ENCODE measurements at regions of chr16 and their contacts with region 1.

Region 1: GRCh38 chr16:67514382-67514828 is 14.2 kb upstream of the RIPOR1 start:
- DNase-seq: peak; percentile 54 to 83 (median 76)
- ATAC-seq: peak; percentile 91
- H3K4me3 ChIP-seq: no peak overlapping the region
- H3K4me3 Mint-ChIP-seq: peak overlapping the region in 2 of 10 donors; percentile 24 to 63
- H3K27ac ChIP-seq: no peak overlapping the region
- H3K27ac Mint-ChIP-seq: peak overlapping the region in 7 of 9 donors; percentile 14 to 61 (median 40)
- H3K4me1 ChIP-seq: peaks cover 4 to 5% of the 10 kb centered on the region in 2 donors
- H3K4me1 Mint-ChIP-seq: peaks cover 13 to 28% (median 21%) of the 10 kb centered on the region in 7 donors
- H3K27me3 ChIP-seq: no peaks in the 10 kb centered on the region
- H3K27me3 Mint-ChIP-seq: peaks cover 0 to 5% (median 0%) of the 10 kb centered on the region in 5 donors

Region 2: DNA sequence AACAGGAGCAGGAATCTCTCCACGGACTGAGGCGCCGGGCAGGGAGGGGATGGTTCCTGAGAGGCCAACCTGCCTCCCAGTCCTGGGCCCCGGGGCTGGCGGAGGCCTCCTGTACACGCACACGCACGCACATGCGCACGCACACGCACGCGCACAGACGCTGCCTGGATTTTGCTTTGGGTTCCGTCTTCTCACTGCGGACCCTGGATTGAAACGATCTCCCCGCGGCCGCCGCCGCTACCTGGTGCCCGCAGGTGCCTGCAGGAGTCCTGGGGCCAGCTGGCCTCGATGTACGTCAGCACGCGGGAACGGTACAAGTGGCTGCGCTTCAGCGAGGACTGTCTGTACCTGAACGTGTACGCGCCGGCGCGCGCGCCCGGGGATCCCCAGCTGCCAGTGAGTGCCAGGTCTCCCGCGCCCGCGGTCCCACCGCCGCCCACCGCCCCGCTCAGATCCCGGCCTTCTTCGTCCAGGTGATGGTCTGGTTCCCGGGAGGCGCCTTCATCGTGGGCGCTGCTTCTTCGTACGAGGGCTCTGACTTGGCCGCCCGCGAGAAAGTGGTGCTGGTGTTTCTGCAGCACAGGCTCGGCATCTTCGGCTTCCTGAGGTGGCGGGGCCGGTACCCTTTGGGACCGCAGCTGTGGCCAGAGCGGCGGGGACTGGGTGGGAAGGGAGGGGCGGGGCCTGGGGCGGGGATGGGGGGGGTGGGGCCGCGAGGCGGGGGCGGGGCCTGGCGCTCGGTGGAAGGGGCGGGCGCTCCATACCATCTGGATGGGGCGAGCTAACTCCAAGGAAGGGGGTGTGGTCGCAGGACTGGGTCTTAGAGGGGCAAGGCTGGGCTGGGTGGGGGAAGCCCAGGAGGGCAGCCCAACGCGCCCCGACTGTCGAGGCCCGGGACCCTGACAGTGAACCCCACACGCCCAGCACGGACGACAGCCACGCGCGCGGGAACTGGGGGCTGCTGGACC is 513.7 kb before region 1 on chr16:
- CTCF ChIA-PET with region 1: no interaction called
- POLR2A ChIA-PET with region 1: no interaction called
- intact Hi-C with region 1: no loop called
- DNase-seq: peak; percentile 39 to 73 (median 61)
- ATAC-seq: peak; percentile 81
- H3K4me3 ChIP-seq: peak overlapping the region; percentile 75
- H3K4me3 Mint-ChIP-seq: peak overlapping the region; percentile 65 to 88 (median 84)
- H3K27ac ChIP-seq: peak overlapping the region; percentile 72
- H3K27ac Mint-ChIP-seq: peak overlapping the region; percentile 68 to 89 (median 80)
- H3K4me1 ChIP-seq: peaks cover 4 to 9% of the 10 kb centered on the region in 2 donors
- H3K4me1 Mint-ChIP-seq: peaks cover 6 to 42% (median 14%) of the 10 kb centered on the region in 7 donors
- H3K27me3 ChIP-seq: no peaks in the 10 kb centered on the region
- H3K27me3 Mint-ChIP-seq: no peaks in the 10 kb centered on the region

Region 3: GRCh38 chr16:67399181-67399733 is 115.1 kb before region 1 on chr16:
- CTCF ChIA-PET with region 1: no interaction called
- POLR2A ChIA-PET with region 1: no interaction called
- intact Hi-C with region 1: no loop called
- DNase-seq: peak in 6 of 9 donors; percentile 29 to 69 (median 46)
- ATAC-seq: peak; percentile 77
- H3K4me3 ChIP-seq: no peak overlapping the region
- H3K4me3 Mint-ChIP-seq: no peak overlapping the region
- H3K27ac ChIP-seq: no peak overlapping the region
- H3K27ac Mint-ChIP-seq: no peak overlapping the region
- H3K4me1 ChIP-seq: no peaks in the 10 kb centered on the region
- H3K4me1 Mint-ChIP-seq: peaks cover under 1 to 3% (median under 1%) of the 10 kb centered on the region in 7 donors
- H3K27me3 ChIP-seq: peaks cover 0 to 1% of the 10 kb centered on the region in 2 donors
- H3K27me3 Mint-ChIP-seq: peaks cover 6 to 26% (median 19%) of the 10 kb centered on the region in 5 donors

Region 4: GRCh38 chr16:67471758-67472384 is 42.5 kb before region 1 on chr16:
- CTCF ChIA-PET with region 1: no interaction called
- POLR2A ChIA-PET with region 1: no interaction called
- intact Hi-C with region 1: no loop called
- DNase-seq: no peak
- ATAC-seq: no peak
- H3K4me3 ChIP-seq: no peak overlapping the region
- H3K4me3 Mint-ChIP-seq: no peak overlapping the region
- H3K27ac ChIP-seq: no peak overlapping the region
- H3K27ac Mint-ChIP-seq: peak overlapping the region in 1 of 9 donors; percentile 13
- H3K4me1 ChIP-seq: peaks cover 0 to 7% of the 10 kb centered on the region in 2 donors
- H3K4me1 Mint-ChIP-seq: peaks cover 4 to 61% (median 50%) of the 10 kb centered on the region in 7 donors
- H3K27me3 ChIP-seq: no peaks in the 10 kb centered on the region
- H3K27me3 Mint-ChIP-seq: no peaks in the 10 kb centered on the region

Region 5: GRCh38 chr16:67490335-67491096 is 23.9 kb before region 1 on chr16:
- CTCF ChIA-PET with region 1: interaction called, 174 read pairs
- POLR2A ChIA-PET with region 1: interaction called, 6 read pairs
- intact Hi-C with region 1: loop called (anchors 1 kb)
- DNase-seq: no peak
- ATAC-seq: peak; percentile 25
- H3K4me3 ChIP-seq: no peak overlapping the region
- H3K4me3 Mint-ChIP-seq: no peak overlapping the region
- H3K27ac ChIP-seq: no peak overlapping the region
- H3K27ac Mint-ChIP-seq: peak overlapping the region in 5 of 9 donors; percentile 28 to 68 (median 49)
- H3K4me1 ChIP-seq: peaks cover 3 to 5% of the 10 kb centered on the region in 2 donors
- H3K4me1 Mint-ChIP-seq: peaks cover 9 to 27% (median 20%) of the 10 kb centered on the region in 7 donors
- H3K27me3 ChIP-seq: no peaks in the 10 kb centered on the region
- H3K27me3 Mint-ChIP-seq: no peaks in the 10 kb centered on the region

Region 6: GRCh38 chr16:67499106-67499505 is 15.3 kb before region 1 on chr16:
- CTCF ChIA-PET with region 1: interaction called, 174 read pairs
- POLR2A ChIA-PET with region 1: interaction called, 6 read pairs
- intact Hi-C with region 1: loop called (anchors 1 kb)
- DNase-seq: no peak
- ATAC-seq: no peak
- H3K4me3 ChIP-seq: no peak overlapping the region
- H3K4me3 Mint-ChIP-seq: no peak overlapping the region
- H3K27ac ChIP-seq: no peak overlapping the region
- H3K27ac Mint-ChIP-seq: peak overlapping the region in 7 of 9 donors; percentile 44 to 93 (median 69)
- H3K4me1 ChIP-seq: peaks cover 12 to 15% of the 10 kb centered on the region in 2 donors
- H3K4me1 Mint-ChIP-seq: peaks cover 15 to 29% (median 20%) of the 10 kb centered on the region in 7 donors
- H3K27me3 ChIP-seq: no peaks in the 10 kb centered on the region
- H3K27me3 Mint-ChIP-seq: no peaks in the 10 kb centered on the region

Region 7: DNA sequence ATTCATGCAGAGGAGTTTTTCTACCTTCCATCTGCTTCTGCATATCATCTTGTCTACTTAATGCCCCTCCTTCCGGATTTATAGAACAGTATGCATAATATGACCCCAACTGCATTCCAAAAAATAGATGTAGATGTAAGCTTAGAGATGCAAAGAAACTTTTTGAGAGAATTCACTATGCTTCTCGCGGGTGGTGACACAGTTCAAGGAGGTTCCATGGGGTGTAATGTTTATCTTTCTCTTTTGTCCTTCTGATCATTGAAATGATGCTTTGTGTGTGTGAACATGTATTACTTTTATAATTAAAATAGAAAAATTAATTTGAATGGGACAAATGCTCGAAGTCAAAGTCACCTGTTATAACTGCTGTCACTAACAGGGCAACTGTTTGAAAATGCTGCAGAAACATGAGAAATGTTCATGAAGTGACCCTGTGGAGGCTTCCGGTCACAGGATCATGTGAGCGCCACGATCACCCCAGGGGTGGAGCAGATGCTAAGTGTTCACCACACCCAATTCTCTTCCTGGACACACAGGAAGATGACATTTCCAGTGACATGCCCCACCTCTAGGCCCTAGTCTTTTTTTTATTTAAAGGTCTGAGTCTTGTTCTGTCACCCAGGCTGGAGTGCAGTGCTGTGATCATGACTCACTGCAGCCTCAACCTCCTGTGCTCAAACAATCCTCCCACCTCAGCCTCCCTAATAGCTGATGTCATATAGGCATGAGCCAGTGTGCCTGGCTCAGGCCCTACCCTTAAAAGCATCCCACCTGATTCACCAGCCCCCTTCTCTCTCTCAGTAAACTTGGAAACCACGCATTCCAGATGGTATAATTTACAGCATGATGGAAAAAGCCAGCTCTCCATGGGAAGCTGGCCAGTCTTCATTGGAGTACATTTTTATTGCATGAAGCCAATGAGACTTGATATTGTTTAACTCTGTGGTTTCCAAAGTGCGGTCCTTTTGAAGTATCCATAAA is 10.1 kb before region 1 on chr16:
- CTCF ChIA-PET with region 1: interaction called, 13 read pairs
- POLR2A ChIA-PET with region 1: interaction called, 6 read pairs
- intact Hi-C with region 1: loop called in 1 of 2 experiments (anchors 1 kb)
- DNase-seq: peak in 6 of 9 donors; percentile 31 to 51 (median 46)
- ATAC-seq: peak; percentile 97
- H3K4me3 ChIP-seq: peak overlapping the region; percentile 6
- H3K4me3 Mint-ChIP-seq: peak overlapping the region; percentile 47 to 82 (median 68)
- H3K27ac ChIP-seq: peak overlapping the region; percentile 56
- H3K27ac Mint-ChIP-seq: peak overlapping the region; percentile 80 to 99 (median 92)
- H3K4me1 ChIP-seq: peaks cover 33 to 42% of the 10 kb centered on the region in 2 donors
- H3K4me1 Mint-ChIP-seq: peaks cover 37 to 64% (median 50%) of the 10 kb centered on the region in 7 donors
- H3K27me3 ChIP-seq: no peaks in the 10 kb centered on the region
- H3K27me3 Mint-ChIP-seq: no peaks in the 10 kb centered on the region